ENCODE measurements at regions of chr13 and their contacts with region 1.

Region 1: DNA sequence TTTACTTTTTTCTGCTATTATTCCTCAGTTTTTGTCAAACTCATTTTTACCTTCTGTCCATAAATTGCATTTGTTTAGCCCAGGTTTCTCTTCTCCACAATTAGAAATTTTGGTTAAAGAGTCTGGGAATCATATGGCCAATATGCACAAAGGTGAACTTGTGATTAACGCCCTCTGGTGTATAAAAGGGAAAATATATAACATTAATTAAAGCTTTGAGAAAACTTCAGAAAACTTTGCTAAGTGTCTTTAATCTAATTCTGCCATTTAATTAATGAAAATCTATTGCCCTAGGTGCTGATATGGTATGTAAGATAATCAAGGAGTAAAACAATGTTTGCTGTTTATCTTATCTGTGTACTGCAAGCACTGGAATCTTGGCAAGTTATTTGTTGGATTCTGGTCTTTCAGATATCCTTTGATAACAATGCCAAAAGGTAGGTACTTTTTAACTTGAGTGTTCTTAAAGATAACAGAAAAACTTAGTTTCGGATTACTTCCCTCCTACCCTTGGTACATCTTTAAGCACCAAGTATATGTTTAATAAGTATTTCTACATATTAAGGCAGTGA is 402.6 kb downstream of the SUCLA2 start:
- DNase-seq: no peak
- H3K4me3 ChIP-seq: no peak overlapping the region
- H3K27ac ChIP-seq: no peak overlapping the region
- H3K4me1 ChIP-seq: no peaks in the 10 kb centered on the region
- H3K27me3 ChIP-seq: peaks cover 2% of the 10 kb centered on the region
- CTCF ChIP-seq: peak; percentile 17 to 45

Region 2: DNA sequence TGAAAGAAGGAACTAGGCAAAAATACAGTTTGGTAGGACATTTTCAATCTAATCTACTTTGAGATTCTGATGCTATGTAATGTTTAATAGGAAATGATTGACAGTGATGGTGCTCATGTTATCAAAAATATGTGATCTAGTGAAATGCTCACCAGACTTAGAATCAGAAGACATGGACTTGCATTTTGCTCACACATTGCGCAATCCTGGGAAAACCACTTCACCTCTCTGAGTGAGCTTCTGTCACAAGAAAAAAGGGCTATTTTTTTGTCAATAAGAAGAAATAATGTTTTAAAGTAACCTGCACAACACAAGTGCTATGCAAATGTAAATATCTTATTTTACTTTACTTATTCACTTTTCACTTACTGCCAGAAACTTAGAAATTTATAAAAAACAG is 320.7 kb before region 1 on chr13:
- CTCF ChIA-PET with region 1: no interaction called
- dilution Hi-C with region 1: no loop called
- in situ Hi-C with region 1: no loop called
- intact Hi-C with region 1: no loop called
- DNase-seq: peak; percentile 26
- H3K4me3 ChIP-seq: no peak overlapping the region
- H3K27ac ChIP-seq: no peak overlapping the region
- H3K4me1 ChIP-seq: no peaks in the 10 kb centered on the region
- H3K27me3 ChIP-seq: no peaks in the 10 kb centered on the region
- CTCF ChIP-seq: no peak

Region 3: DNA sequence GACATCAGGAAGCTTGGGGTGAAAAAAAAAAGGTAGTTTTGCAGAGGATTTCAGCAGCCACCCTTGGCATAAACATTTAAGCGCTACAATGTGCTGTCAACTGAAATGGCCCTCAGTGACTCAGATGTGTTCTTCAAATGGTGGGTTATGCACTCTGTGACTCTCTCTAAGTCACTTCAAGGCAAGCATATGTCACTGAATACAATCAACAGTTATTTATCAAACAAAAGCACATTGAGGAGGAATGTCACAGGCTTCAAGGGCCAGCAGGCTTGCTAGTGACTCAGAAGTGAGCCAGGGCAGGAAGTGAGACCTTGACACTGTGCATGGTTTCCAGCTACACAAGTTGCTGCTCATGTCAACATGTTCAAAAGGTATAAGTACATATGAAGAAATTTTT is 177.9 kb before region 1 on chr13:
- CTCF ChIA-PET with region 1: no interaction called
- dilution Hi-C with region 1: no loop called
- in situ Hi-C with region 1: no loop called
- intact Hi-C with region 1: loop called (anchors 2 kb)
- DNase-seq: no peak
- H3K4me3 ChIP-seq: no peak overlapping the region
- H3K27ac ChIP-seq: no peak overlapping the region
- H3K4me1 ChIP-seq: no peaks in the 10 kb centered on the region
- H3K27me3 ChIP-seq: no peaks in the 10 kb centered on the region
- CTCF ChIP-seq: no peak

Region 4: GRCh38 chr13:47826471-47826870 is 228.0 kb after region 1 on chr13:
- CTCF ChIA-PET with region 1: no interaction called
- dilution Hi-C with region 1: no loop called
- in situ Hi-C with region 1: no loop called
- intact Hi-C with region 1: no loop called
- DNase-seq: no peak
- H3K4me3 ChIP-seq: no peak overlapping the region
- H3K27ac ChIP-seq: no peak overlapping the region
- H3K4me1 ChIP-seq: no peaks in the 10 kb centered on the region
- H3K27me3 ChIP-seq: no peaks in the 10 kb centered on the region
- CTCF ChIP-seq: no peak